BJ (cell line): ENCODE measurements at regions of chr9 and their contacts with region 1.

Region 1: GRCh38 chr9:19174127-19174912 is 47.0 kb upstream of the PLIN2 start:
- DNase-seq: peak; percentile 49
- H3K4me3 ChIP-seq: no peak overlapping the region
- H3K27me3 ChIP-seq: no peaks in the 10 kb centered on the region
- CTCF ChIP-seq: peak; percentile 49

Region 2: DNA sequence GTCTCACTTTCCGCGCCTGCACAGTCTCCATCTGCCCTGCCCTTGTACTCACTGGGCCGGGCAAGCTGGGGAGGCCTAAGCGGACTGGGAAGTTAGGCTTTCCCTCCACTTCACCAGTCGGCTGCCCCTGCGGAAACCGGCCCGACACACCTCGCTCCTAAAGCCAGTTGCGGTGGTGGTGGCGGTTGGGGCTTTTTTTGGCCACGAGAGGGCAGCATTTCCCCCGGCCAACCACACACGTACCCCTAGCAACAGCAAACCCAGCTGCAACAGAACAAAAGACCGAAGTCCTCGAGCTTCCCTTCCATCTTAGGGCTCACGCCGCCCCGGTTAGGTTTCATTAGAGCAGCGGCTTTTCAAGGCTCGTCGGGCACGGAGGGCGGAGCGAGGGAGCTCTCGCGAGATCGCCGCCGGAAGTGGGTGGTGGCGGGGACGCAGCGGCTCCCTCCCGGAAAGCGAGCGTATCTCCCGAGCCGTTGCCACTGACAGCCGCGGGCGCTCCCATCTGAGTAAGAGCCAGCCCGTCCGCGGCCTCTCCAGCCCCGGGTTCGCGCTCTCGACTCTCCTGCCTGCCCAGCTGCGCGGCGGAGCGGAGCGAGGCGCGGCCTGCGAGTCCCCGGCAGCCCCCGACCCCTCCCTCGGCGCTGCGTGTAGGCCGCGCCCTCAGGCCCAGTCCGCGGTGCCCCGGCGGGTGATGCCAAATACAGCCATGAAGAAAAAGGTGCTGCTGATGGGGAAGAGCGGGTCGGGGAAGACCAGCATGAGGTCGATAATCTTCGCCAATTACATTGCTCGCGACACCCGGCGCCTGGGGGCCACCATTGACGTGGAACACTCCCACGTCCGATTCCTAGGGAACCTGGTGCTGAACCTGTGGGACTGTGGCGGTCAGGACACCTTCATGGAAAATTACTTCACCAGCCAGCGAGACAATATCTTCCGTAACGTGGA is 125.1 kb before region 1 on chr9 and contains the start of gene RRAGA:
- CTCF ChIA-PET with region 1: interaction called, 19 read pairs
- POLR2A ChIA-PET with region 1: no interaction called
- DNase-seq: peak; percentile 73
- H3K4me3 ChIP-seq: peak within 1 kb of the TSS; percentile 53
- H3K27me3 ChIP-seq: no peaks in the 10 kb centered on the region
- CTCF ChIP-seq: peak; percentile 81
- polyA plus RNA-seq, gene RRAGA: 161 and 167 TPM in 2 replicates

Region 3: GRCh38 chr9:19085295-19085694 is 89.0 kb before region 1 on chr9:
- CTCF ChIA-PET with region 1: interaction called, 18 read pairs
- POLR2A ChIA-PET with region 1: no interaction called
- DNase-seq: no peak
- H3K4me3 ChIP-seq: no peak overlapping the region
- H3K27me3 ChIP-seq: no peaks in the 10 kb centered on the region
- CTCF ChIP-seq: peak; percentile 30

Region 4: DNA sequence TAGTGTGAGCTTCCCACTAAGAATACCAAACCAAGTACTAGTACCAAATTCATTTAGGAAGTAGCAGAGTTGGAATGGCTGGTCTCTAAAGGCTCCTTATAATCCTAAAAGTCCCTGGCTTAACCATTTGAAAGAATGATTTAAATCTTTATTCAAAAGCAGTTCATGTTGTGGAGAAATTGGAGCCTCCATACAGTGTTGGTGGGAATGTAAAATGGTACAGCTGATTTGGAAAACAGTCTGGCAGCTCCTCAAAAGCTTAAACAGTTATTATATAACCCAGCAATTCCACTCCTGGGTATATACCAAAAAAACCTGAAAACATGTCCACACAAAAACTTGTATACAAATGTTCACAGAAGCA is 49.9 kb before region 1 on chr9:
- CTCF ChIA-PET with region 1: interaction called, 6 read pairs
- POLR2A ChIA-PET with region 1: interaction called, 12 read pairs
- DNase-seq: no peak
- H3K4me3 ChIP-seq: no peak overlapping the region
- H3K27me3 ChIP-seq: no peaks in the 10 kb centered on the region
- CTCF ChIP-seq: no peak